ENCODE measurements at regions of chr11 and their contacts with region 1.

Region 1: DNA sequence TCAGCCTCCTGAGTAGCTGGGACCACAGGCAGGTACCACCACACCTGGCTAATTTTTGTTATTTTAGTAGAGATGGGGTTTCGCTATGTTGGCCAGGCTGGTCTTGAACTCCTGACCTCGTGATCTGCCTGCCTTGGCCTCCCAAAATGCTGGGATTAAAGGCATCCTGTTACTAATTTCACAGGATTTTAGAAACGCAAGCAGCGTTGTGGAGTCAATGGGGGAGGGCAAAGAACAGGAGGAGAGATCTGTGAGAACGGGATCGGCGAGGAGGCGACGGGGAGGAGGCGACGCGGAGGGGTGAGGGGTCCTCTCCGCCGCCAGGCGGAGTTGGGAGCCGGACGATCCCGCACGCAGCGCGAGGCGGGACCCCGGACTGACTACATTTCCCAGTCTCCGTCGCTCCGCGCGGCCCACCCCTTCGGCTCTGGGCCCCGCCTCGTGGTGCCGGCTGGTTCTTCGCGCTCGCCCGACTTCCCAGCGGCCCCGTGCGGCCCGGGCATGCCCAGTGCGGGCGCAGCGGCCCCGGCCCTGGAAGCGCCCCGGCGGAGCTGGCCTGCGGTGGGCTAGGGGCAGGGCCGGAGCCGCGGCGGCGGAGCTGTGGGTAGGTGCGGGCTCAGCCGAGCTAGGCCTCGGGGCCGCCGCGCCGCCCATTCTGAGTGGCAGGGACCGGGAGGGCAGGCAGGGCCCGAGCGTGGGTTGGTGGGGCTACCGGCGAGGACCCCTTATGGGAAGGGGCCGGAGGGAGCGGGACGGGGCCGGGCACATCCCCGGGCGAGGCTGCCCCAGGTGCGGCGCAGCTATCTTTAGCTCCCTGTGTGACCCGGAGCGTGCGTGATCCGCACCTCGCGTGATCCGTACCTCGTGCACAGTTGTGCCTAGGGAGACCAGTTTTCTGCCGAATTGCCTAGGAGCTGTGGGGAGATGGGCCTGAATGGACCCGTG is at the start of gene EI24:
- DNase-seq: peak; percentile 87 to 94 (median 90)
- H3K4me3 ChIP-seq: peak within 1 kb of the TSS; percentile 90
- H3K27ac ChIP-seq: peak within 1 kb of the TSS; percentile 74 to 78
- H3K4me1 ChIP-seq: peaks cover 4% of the 10 kb centered on the region
- H3K27me3 ChIP-seq: no peaks in the 10 kb centered on the region
- CTCF ChIP-seq: peak; percentile 73 to 83 (median 73)
- EP300 ChIP-seq: no peak
- POLR2A ChIP-seq: peak; percentile 42
- total RNA-seq, gene EI24: 44.9 to 58.4 (median 53.4) TPM

Region 2: GRCh38 chr11:125287491-125288210 is 281.6 kb before region 1 on chr11:
- intact Hi-C with region 1: no loop called
- DNase-seq: peak; percentile 60 to 78 (median 70)
- H3K4me3 ChIP-seq: no peak overlapping the region
- H3K27ac ChIP-seq: peak overlapping the region; percentile 25 to 70
- H3K4me1 ChIP-seq: peaks cover 23% of the 10 kb centered on the region
- H3K27me3 ChIP-seq: no peaks in the 10 kb centered on the region
- CTCF ChIP-seq: no peak
- EP300 ChIP-seq: no peak
- POLR2A ChIP-seq: no peak

Region 3: DNA sequence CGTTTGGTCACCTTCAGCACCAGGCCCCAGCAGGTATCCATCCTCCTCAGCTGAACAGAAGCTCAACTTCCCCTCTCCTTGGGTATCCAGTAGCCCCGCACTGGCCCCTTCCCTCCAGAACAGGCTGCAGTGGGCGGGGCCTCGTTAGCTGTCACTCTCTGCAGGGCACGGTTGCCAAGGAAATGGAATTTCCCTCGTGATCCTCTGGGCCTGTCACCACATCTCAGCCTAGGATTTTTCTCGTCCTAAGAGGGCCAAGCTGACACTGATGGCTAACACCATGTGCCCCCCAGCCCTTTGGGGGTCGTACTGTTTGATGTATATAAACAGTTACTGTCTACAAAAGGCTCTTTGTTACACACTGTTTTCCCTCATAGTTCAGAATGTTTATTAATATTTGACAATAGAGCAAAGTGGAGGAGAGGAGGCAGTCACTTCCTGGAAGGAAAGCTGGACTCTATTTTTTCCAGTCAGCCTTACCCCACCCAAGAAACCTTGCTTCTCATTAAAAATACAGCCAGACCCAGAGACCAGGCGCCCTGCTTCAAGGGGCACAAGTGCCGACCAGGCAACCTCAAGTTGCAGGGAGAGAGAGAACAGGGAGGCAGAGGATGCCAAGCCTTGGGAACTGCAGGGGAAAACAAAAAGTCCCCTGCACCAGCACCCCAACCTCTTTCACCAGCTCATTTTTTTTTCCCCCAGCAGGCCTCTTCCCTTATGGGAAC is 117.7 kb before region 1 on chr11:
- intact Hi-C with region 1: no loop called
- DNase-seq: peak; percentile 45 to 69 (median 63)
- H3K4me3 ChIP-seq: no peak overlapping the region
- H3K27ac ChIP-seq: peak overlapping the region in 1 of 2 donors; percentile 61
- H3K4me1 ChIP-seq: peaks cover 7% of the 10 kb centered on the region
- H3K27me3 ChIP-seq: no peaks in the 10 kb centered on the region
- CTCF ChIP-seq: no peak
- EP300 ChIP-seq: no peak
- POLR2A ChIP-seq: no peak

Region 4: DNA sequence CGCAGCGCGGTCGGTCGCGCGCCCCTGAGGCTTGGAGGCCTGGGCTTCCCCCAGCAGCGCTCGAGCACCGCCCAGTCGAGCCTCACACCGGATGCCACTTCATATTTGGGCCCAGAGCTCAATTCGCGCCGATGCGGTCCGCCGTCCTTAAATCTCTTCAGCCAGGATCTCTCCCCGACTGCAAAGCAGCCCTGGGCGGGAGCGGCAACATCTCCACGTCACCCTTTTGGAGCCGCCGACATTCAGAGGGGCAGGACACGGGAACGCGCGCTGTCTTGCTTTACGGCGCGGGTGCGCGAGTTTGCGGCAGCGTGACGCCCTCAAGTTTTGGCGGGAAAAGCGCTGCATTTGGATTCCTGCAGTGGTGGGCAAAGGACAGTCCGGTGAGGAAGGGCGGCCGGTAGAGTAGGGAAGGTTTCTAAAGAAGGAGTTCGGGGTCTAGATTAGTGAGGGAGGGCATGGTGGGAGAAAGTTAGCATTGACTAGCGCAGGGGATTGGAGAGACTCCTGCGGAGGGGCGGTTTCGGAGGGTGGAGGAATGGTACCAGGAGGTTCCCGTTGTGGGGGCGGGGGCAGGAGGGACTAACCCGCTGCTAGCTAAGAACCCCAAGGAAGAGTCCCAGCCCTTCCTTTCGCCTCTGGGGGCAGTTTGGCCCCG is 56.5 kb after region 1 on chr11:
- intact Hi-C with region 1: loop called in 1 of 4 experiments (anchors 10 kb)
- DNase-seq: peak; percentile 86 to 92 (median 91)
- H3K4me3 ChIP-seq: peak overlapping the region; percentile 87
- H3K27ac ChIP-seq: peak overlapping the region; percentile 50 to 96
- H3K4me1 ChIP-seq: peaks cover 2% of the 10 kb centered on the region
- H3K27me3 ChIP-seq: no peaks in the 10 kb centered on the region
- CTCF ChIP-seq: no peak
- EP300 ChIP-seq: no peak
- POLR2A ChIP-seq: peak; percentile 57

Measured in ovary (tissue), 10 donors.